Aorta (tissue), 5 donors: ENCODE measurements at regions of chr11 and their contacts with region 1.

Region 1: GRCh38 chr11:65711785-65712632 is at the start of gene KAT5:
- DNase-seq: peak; percentile 99
- ATAC-seq: peak; percentile 96
- H3K4me3 ChIP-seq: peak within 1 kb of the TSS; percentile 19 to 22
- H3K27ac ChIP-seq: peak within 1 kb of the TSS; percentile 72 to 80
- H3K4me1 ChIP-seq: no peaks in the 10 kb centered on the region
- H3K27me3 ChIP-seq: no peaks in the 10 kb centered on the region
- total RNA-seq, gene KAT5: 59.8 to 64.4 TPM

Region 2: GRCh38 chr11:65662799-65663638 is 49.0 kb before region 1 on chr11 and contains the start of gene RELA:
- intact Hi-C with region 1: loop called in 1 of 2 experiments (anchors 5 kb)
- DNase-seq: peak; percentile 97 to 98
- ATAC-seq: peak; percentile 95
- H3K4me3 ChIP-seq: peak within 1 kb of the TSS; percentile 82 to 93
- H3K27ac ChIP-seq: peak within 1 kb of the TSS; percentile 83 to 92
- H3K4me1 ChIP-seq: no peaks in the 10 kb centered on the region
- H3K27me3 ChIP-seq: no peaks in the 10 kb centered on the region
- total RNA-seq, gene RELA: 98.2 to 108 TPM

Region 3: GRCh38 chr11:65766535-65766934 is 54.5 kb after region 1 on chr11:
- intact Hi-C with region 1: loop called in 1 of 2 experiments (anchors 5 kb)
- DNase-seq: no peak
- ATAC-seq: no peak
- H3K4me3 ChIP-seq: no peak overlapping the region
- H3K27ac ChIP-seq: no peak overlapping the region
- H3K4me1 ChIP-seq: no peaks in the 10 kb centered on the region
- H3K27me3 ChIP-seq: no peaks in the 10 kb centered on the region

Region 4: GRCh38 chr11:65779851-65780577 is 68.0 kb after region 1 on chr11:
- intact Hi-C with region 1: loop called in 1 of 2 experiments (anchors 5 kb)
- DNase-seq: peak; percentile 86 to 93
- ATAC-seq: peak; percentile 87
- H3K4me3 ChIP-seq: peak overlapping the region; percentile 84 to 87
- H3K27ac ChIP-seq: no peak overlapping the region
- H3K4me1 ChIP-seq: no peaks in the 10 kb centered on the region
- H3K27me3 ChIP-seq: no peaks in the 10 kb centered on the region

Region 5: GRCh38 chr11:65817835-65818742 is 106.1 kb after region 1 on chr11:
- intact Hi-C with region 1: loop called in 1 of 2 experiments (anchors 2 kb)
- DNase-seq: peak; percentile 96 to 100
- ATAC-seq: peak; percentile 97
- H3K4me3 ChIP-seq: peak overlapping the region; percentile 71 to 94
- H3K27ac ChIP-seq: no peak overlapping the region
- H3K4me1 ChIP-seq: no peaks in the 10 kb centered on the region
- H3K27me3 ChIP-seq: no peaks in the 10 kb centered on the region